ENCODE measurements at regions of chr18 and their contacts with region 1.

Region 1: DNA sequence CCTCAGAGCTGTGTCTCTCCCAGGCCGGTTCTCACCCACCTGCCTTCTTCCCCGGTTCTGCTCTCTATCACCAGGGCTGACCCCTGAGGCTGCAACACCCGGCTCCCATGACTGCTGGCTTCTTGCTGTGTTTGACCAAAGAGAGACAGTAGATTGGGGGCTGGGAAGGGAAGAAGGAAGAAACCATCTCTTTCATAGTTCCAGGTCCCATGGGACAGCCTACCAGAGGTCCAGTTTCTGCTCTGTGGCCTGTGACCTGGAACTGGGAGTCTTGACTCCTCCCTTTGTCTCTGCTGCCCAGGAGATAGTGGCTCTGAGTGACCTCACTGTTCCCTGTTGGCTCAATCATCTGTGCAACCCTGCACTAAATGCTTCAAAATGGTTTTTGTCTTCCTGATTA is 38.1 kb downstream of the ALPK2 start:
- DNase-seq: no peak
- H3K4me3 ChIP-seq: no peak overlapping the region
- H3K27ac ChIP-seq: peak overlapping the region in 1 of 2 donors; percentile 3
- H3K4me1 ChIP-seq: peaks cover 11% of the 10 kb centered on the region
- H3K27me3 ChIP-seq: no peaks in the 10 kb centered on the region
- CTCF ChIP-seq: no peak
- EP300 ChIP-seq: no peak
- POLR2A ChIP-seq: no peak

Region 2: GRCh38 chr18:58529714-58530354 is 61.0 kb before region 1 on chr18:
- intact Hi-C with region 1: loop called in 1 of 4 experiments (anchors 10 kb)
- DNase-seq: no peak
- H3K4me3 ChIP-seq: no peak overlapping the region
- H3K27ac ChIP-seq: no peak overlapping the region
- H3K4me1 ChIP-seq: no peaks in the 10 kb centered on the region
- H3K27me3 ChIP-seq: no peaks in the 10 kb centered on the region
- CTCF ChIP-seq: peak in 1 of 3 donors; percentile 29
- EP300 ChIP-seq: no peak
- POLR2A ChIP-seq: no peak

Region 3: DNA sequence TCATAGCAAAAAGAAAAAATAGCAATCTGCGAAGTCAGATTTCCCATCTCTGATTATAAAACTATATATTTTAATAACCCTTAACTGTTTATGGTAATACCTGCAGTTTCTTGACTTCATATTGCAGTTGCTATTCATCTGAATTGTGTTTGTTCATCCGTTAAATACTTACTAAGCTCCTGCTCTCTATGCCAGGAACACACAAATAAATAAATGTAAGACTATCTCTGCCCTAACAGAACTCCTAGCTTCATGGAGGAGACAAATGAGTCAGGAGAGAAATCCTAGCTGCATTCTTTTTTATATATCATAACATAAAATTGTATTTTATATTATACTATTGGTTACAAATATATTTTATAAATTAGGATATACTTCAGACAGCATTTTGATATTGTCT is 141.6 kb after region 1 on chr18:
- intact Hi-C with region 1: no loop called
- DNase-seq: no peak
- H3K4me3 ChIP-seq: no peak overlapping the region
- H3K27ac ChIP-seq: no peak overlapping the region
- H3K4me1 ChIP-seq: no peaks in the 10 kb centered on the region
- H3K27me3 ChIP-seq: no peaks in the 10 kb centered on the region
- CTCF ChIP-seq: no peak
- EP300 ChIP-seq: no peak
- POLR2A ChIP-seq: no peak

Region 4: GRCh38 chr18:58761241-58761969 is 170.6 kb after region 1 on chr18:
- intact Hi-C with region 1: no loop called
- DNase-seq: no peak
- H3K4me3 ChIP-seq: no peak overlapping the region
- H3K27ac ChIP-seq: no peak overlapping the region
- H3K4me1 ChIP-seq: no peaks in the 10 kb centered on the region
- H3K27me3 ChIP-seq: no peaks in the 10 kb centered on the region
- CTCF ChIP-seq: no peak
- EP300 ChIP-seq: no peak
- POLR2A ChIP-seq: no peak

Measured in ovary (tissue), 10 donors.